ENCODE measurements at regions of chr5 and their contacts with region 1.

Region 1: GRCh38 chr5:40717281-40717680 is 37.6 kb downstream of the PTGER4 start:
- DNase-seq: no peak
- H3K4me3 ChIP-seq: no peak overlapping the region
- H3K27ac ChIP-seq: no peak overlapping the region
- H3K4me1 ChIP-seq: peaks cover 17% of the 10 kb centered on the region
- H3K27me3 ChIP-seq: no peaks in the 10 kb centered on the region
- CTCF ChIP-seq: no peak

Region 2: DNA sequence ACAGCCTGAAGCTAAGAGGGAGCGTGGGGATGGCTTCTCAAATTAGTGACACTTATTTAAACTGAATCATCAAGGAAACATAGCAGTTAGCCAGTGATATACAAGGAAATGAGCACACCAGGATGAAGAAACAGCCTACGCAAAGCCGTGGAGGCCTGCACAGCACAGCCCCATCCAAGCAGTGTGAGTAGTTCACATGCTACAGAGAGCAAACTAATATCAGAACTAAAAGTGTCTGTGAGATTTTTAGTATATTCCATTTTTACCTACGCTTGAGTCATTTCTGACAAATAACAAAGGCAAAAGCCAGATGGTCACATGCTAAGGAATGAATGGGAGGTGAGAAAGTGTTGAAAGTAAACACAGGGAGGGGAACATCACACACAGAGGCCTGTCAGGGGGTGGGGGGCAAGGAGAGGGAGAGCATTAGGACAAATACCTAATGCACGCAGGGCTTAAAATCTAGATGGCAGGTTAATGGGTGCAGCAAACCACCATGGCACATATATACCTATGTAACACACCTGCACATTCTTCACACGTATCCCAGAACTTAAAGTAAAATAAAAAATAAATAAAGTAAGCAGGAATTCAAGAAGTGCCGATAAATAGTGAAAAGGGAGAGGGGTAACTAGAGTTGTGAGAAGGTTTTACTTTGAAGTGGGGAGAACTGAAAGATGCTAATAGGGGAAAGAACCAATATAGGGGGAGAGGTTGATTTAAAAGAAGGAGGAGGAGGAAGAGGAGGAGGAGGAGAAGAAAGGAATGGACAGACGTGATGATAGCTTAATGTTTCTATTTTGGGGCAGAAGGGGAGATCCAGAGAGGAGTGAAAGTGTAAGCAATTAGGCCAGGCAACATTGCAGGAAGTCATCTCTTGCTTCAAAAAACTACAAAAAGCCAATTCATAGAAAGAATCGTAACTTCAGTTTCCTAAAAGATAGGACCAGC is 138.5 kb before region 1 on chr5:
- CTCF ChIA-PET with region 1: no interaction called
- POLR2A ChIA-PET with region 1: interaction called, 20 read pairs
- intact Hi-C with region 1: no loop called
- DNase-seq: peak in 1 of 2 experiments; percentile 61
- H3K4me3 ChIP-seq: no peak overlapping the region
- H3K27ac ChIP-seq: no peak overlapping the region
- H3K4me1 ChIP-seq: peaks cover 18% of the 10 kb centered on the region
- H3K27me3 ChIP-seq: no peaks in the 10 kb centered on the region
- CTCF ChIP-seq: no peak

Region 3: GRCh38 chr5:40700116-40700782 is 17.0 kb before region 1 on chr5:
- CTCF ChIA-PET with region 1: no interaction called
- POLR2A ChIA-PET with region 1: no interaction called
- intact Hi-C with region 1: no loop called
- DNase-seq: no peak
- H3K4me3 ChIP-seq: no peak overlapping the region
- H3K27ac ChIP-seq: no peak overlapping the region
- H3K4me1 ChIP-seq: no peaks in the 10 kb centered on the region
- H3K27me3 ChIP-seq: no peaks in the 10 kb centered on the region
- CTCF ChIP-seq: no peak

Measured in PC-9 (cell line).